Head of caudate nucleus (tissue), 42 donors: ENCODE measurements at regions of chr13 and their contacts with region 1.

Region 1: GRCh38 chr13:100987953-100988352 is 313.4 kb upstream of the TMTC4 start:
- DNase-seq: peak in 27 of 42 donors; percentile 12 to 74 (median 39)

Region 2: GRCh38 chr13:100721885-100722512 is 266.0 kb before region 1 on chr13:
- intact Hi-C with region 1: loop called (anchors 5 kb)
- DNase-seq: peak in 41 of 42 donors; percentile 12 to 92 (median 70)

Region 3: DNA sequence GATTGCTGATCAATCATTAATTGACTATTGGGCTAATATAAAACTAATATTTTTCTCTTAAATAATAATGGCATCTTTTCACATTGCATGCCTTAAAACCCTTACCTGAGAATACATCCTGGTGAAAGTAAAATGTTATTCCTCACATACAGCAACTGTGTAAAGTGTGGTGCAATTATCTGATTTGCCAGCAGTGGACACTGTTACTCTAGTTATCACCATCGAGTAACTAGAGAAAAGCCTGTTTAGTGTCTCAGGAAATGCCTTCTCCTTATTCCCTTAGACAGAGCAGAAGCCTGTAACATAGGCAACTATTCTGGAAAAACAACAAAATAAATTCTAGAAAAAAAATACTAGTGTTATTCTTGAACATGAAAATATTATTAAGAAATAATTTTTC is 954.1 kb after region 1 on chr13:
- intact Hi-C with region 1: no loop called
- DNase-seq: peak in 16 of 42 donors; percentile 12 to 64 (median 31)

Region 4: GRCh38 chr13:101955764-101956163 is 967.8 kb after region 1 on chr13:
- intact Hi-C with region 1: no loop called
- DNase-seq: no peak